PC-3 (cell line): ENCODE measurements at regions of chr2 and their contacts with region 1.

Region 1: DNA sequence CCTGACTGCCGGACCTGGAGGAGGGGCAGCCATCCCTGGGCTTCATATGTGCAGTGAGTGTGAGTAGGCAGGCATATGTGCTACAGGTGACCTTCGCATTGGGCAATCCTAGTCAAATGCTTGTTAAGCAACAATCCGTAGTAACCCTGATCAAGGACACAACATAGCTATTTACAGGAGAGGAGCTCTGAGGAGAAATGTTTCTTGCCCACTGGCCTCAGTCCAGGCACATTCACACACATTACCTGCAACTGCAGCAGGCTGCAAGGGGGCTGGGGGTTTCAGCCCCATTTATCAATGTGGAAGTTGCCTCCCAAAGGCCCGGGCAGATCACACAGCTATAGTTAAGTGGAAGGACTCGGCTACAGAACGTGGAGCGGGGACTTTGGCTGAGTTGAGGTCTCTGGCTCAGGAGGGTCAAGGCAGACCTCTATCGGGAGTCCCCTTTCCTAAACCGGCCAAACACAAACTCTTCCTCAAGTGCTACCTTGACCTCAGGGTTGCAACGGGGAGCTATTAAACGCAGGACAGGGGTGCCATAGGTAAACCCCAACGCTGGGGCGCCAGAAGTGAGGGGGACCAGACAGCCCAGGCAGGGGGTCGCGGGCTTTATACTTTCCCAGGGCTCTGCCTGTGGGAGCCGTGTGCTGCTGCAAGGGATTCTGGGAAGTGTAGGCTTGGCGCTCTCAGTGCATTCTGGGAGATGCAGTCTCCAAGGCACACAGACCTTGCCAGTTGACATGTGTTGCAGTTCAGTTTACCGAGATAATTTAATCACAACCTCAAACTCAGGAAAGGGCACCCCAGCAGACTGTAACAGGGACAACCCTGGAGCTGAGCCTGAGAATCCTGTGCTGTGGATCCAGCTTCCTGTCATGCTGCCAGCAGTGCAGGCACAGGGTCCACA is 9.4 kb downstream of the KHK start:
- DNase-seq: peak; percentile 23
- ATAC-seq: peak; percentile 36; the same call in 1 of the 2 replicates
- H3K4me3 ChIP-seq: no peak overlapping the region
- H3K27ac ChIP-seq: no peak overlapping the region
- H3K4me1 ChIP-seq: no peaks in the 10 kb centered on the region
- H3K27me3 ChIP-seq: no peaks in the 10 kb centered on the region
- CTCF ChIP-seq: no peak

Region 2: DNA sequence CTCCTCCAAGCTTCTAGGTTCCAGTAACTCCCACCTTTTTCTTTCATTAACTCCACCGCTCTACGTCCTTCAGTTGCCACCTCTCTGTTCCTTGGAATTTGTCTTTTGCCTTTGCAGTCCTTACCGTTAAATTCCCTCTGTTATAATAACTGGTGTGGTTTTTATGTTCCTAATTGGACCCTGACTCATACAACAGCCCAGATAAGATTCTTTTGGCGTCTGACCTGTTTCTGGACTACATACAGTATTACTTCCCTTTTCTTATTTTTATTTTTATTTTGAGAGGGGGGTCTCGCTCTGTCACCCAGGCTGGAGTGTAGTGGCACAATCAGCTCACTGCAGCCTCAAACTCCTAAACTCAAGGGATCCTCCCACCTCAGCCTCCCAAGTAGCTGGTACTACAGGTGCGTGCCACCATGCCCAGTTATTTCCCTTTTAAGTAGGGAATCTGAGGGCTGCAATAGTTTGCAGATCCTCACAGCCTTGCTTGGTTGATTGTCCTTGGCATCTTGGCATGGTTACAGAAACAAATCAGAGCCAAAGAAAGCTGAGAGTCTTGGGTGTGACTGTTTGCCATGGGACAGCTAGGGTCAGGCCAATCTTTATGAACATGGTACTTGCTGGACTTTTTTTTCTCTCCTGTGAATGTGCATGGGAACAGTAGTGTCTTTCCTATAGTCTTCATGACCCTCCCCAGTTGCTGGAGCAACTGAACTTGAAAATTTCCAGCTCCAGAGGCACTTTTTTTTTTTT is 74.8 kb after region 1 on chr2:
- CTCF ChIA-PET with region 1: no interaction called
- POLR2A ChIA-PET with region 1: no interaction called
- intact Hi-C with region 1: no loop called
- DNase-seq: no peak
- ATAC-seq: peak; percentile 32
- H3K4me3 ChIP-seq: no peak overlapping the region
- H3K27ac ChIP-seq: no peak overlapping the region
- H3K4me1 ChIP-seq: no peaks in the 10 kb centered on the region
- H3K27me3 ChIP-seq: peaks cover 26% of the 10 kb centered on the region
- CTCF ChIP-seq: no peak

Region 3: GRCh38 chr2:27202854-27203253 is 106.9 kb after region 1 on chr2:
- CTCF ChIA-PET with region 1: no interaction called
- POLR2A ChIA-PET with region 1: interaction called, 11 read pairs
- intact Hi-C with region 1: no loop called
- DNase-seq: no peak
- ATAC-seq: no peak
- H3K4me3 ChIP-seq: no peak overlapping the region
- H3K27ac ChIP-seq: no peak overlapping the region
- H3K4me1 ChIP-seq: no peaks in the 10 kb centered on the region
- H3K27me3 ChIP-seq: no peaks in the 10 kb centered on the region
- CTCF ChIP-seq: no peak